ENCODE measurements at regions of chr7 and their contacts with region 1.

Region 1: GRCh38 chr7:36651404-36651803 is 72.9 kb downstream of the AOAH start:
- DNase-seq: peak; percentile 73
- H3K4me3 ChIP-seq: no peak overlapping the region
- H3K27ac ChIP-seq: peak overlapping the region; percentile 52
- H3K4me1 ChIP-seq: peaks cover 23% of the 10 kb centered on the region
- H3K27me3 ChIP-seq: no peaks in the 10 kb centered on the region
- CTCF ChIP-seq: no peak

Region 2: DNA sequence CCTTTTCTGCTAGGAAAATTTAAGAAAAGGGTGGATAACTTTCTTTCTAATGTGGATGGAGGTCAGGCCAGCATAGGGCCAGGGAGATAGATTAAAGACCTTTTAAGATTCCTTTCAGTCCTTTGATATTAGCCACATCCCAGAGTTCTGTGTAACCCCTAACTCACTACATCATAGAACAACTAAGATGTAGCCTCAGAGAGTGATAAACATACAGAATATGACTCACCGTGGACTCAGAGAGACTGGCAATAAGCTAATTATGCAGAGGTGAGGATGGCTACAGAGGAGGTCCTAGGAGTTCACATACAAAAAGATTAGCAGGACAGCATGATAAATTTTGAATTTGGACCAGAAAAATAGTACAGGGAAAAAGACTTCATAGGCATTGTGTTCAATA is 68.1 kb before region 1 on chr7:
- CTCF ChIA-PET with region 1: no interaction called
- dilution Hi-C with region 1: no loop called
- in situ Hi-C with region 1: no loop called
- intact Hi-C with region 1: loop called (anchors 2 kb)
- DNase-seq: peak; percentile 62
- H3K4me3 ChIP-seq: no peak overlapping the region
- H3K27ac ChIP-seq: no peak overlapping the region
- H3K4me1 ChIP-seq: peaks cover 10% of the 10 kb centered on the region
- H3K27me3 ChIP-seq: no peaks in the 10 kb centered on the region
- CTCF ChIP-seq: no peak